ENCODE measurements at regions of chr7 and their contacts with region 1.

Region 1: GRCh38 chr7:50534690-50535290 is 30.4 kb downstream of the DDC start:
- DNase-seq: peak; percentile 96 to 100
- H3K4me3 ChIP-seq: peak overlapping the region; percentile 20; the same call in 1 of the 2 replicates
- H3K27ac ChIP-seq: peak overlapping the region; percentile 91
- H3K4me1 ChIP-seq: peaks cover 52% of the 10 kb centered on the region
- H3K27me3 ChIP-seq: no peaks in the 10 kb centered on the region
- CTCF ChIP-seq: no peak; the same call in none of the 2 replicates

Region 2: GRCh38 chr7:49776994-49777393 is 757.8 kb before region 1 on chr7:
- CTCF ChIA-PET with region 1: no interaction called
- POLR2A ChIA-PET with region 1: no interaction called
- intact Hi-C with region 1: no loop called
- DNase-seq: no peak
- H3K4me3 ChIP-seq: no peak overlapping the region
- H3K27ac ChIP-seq: no peak overlapping the region
- H3K4me1 ChIP-seq: no peaks in the 10 kb centered on the region
- H3K27me3 ChIP-seq: no peaks in the 10 kb centered on the region; the same call in none of the 2 replicates
- CTCF ChIP-seq: no peak

Region 3: DNA sequence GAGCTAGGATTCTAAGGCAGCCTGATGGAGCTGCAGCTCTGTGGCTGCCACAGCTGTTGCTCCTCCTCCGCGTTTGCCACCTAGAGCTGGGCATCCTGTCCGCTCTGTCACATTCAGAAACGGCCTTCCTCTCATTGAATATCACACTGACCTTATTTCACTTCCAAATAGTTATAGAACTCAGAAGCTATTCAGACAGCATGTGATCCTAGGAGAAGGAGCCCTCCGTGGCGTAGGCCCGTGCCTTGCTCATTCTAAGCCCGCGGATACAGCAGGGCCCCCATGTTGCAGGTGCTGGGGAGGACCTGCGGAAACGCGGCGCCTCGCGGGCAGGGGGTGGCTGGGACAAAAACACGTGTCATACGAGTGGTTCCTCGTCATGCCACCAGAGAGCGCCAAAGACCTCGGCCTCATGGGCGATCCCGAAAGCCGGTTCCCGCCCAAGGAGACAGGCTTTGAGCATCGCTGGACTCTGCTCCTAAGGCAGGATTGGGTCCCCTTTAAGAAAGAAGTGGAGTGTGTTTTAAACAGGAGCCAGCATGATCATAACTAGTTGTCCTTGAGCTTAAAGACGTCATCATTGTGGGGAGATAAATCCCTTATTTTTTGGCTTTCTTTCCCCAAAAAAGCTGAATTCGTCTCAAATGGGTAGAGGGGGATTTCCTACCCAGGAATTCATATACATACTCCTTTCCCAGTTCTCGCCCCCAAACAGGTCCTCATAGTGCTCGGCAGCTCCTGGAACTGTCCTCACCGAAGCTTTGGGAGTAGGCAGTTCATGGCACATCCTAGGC is 66.8 kb before region 1 on chr7:
- CTCF ChIA-PET with region 1: interaction called, 6 read pairs
- POLR2A ChIA-PET with region 1: no interaction called
- intact Hi-C with region 1: loop called (anchors 1 kb)
- DNase-seq: peak; percentile 55 to 86
- H3K4me3 ChIP-seq: peak overlapping the region; percentile 38; the same call in 1 of the 2 replicates
- H3K27ac ChIP-seq: no peak overlapping the region
- H3K4me1 ChIP-seq: peaks cover 4% of the 10 kb centered on the region
- H3K27me3 ChIP-seq: no peaks in the 10 kb centered on the region
- CTCF ChIP-seq: peak; percentile 99

Region 4: DNA sequence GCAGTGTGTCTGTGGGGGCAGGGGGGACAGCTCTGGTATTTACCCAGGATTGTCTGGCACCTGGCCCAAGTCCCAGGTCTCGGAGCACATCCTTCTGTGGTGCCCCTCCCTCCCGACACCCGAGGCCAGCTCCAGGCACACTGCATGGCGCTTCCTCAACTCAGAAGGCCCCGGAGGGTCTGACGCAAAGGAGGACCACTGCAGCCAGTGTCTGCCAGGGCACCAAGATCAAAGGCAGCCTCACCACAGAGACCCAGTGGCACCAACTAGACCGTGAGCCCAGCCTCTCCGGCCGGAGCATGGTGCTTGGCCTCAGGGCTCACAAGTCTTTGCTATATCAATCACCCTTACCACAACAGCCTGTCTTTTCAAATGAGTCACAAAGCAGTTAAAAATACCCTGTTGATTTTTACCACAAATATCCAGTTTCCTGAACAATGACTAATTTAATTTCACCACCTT is 129.7 kb after region 1 on chr7:
- CTCF ChIA-PET with region 1: no interaction called
- POLR2A ChIA-PET with region 1: no interaction called
- intact Hi-C with region 1: loop called (anchors 2 kb)
- DNase-seq: peak; percentile 81 to 98
- H3K4me3 ChIP-seq: peak overlapping the region; percentile 7; the same call in 1 of the 2 replicates
- H3K27ac ChIP-seq: peak overlapping the region; percentile 74
- H3K4me1 ChIP-seq: peaks cover 29% of the 10 kb centered on the region
- H3K27me3 ChIP-seq: no peaks in the 10 kb centered on the region
- CTCF ChIP-seq: no peak

Region 5: DNA sequence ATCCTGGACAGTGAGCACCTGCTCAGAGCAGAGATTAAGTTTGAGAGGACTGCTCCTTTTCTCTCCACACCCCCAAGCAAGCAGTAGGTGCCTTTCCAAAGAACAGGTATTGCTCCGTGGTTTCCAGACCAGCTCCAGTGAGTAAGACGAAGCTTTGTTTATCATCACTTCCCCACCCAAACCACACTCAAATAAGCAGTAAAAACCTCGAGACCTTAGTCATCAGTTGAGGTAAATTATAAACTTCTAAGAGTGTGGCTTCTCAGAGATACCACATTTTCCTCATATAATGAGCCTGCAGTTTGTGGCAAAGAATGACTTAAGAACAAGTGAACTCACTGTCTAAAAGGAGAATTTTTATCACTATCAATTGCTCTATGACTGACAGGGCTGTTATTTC is 298.0 kb after region 1 on chr7:
- CTCF ChIA-PET with region 1: no interaction called
- POLR2A ChIA-PET with region 1: no interaction called
- intact Hi-C with region 1: loop called (anchors 1 kb)
- DNase-seq: peak; percentile 61 to 98
- H3K4me3 ChIP-seq: no peak overlapping the region
- H3K27ac ChIP-seq: peak overlapping the region; percentile 49
- H3K4me1 ChIP-seq: peaks cover 49% of the 10 kb centered on the region
- H3K27me3 ChIP-seq: no peaks in the 10 kb centered on the region
- CTCF ChIP-seq: no peak

Region 6: GRCh38 chr7:51315393-51316261 is 780.8 kb after region 1 on chr7:
- CTCF ChIA-PET with region 1: no interaction called
- POLR2A ChIA-PET with region 1: no interaction called
- intact Hi-C with region 1: loop called (anchors 10 kb)
- DNase-seq: peak; percentile 92 to 98
- H3K4me3 ChIP-seq: peak overlapping the region; percentile 71
- H3K27ac ChIP-seq: peak overlapping the region; percentile 86
- H3K4me1 ChIP-seq: peaks cover 34% of the 10 kb centered on the region
- H3K27me3 ChIP-seq: no peaks in the 10 kb centered on the region
- CTCF ChIP-seq: no peak

Measured in PC-9 (cell line).